GM18951 (cell line): ENCODE measurements at regions of chr5 and their contacts with region 1.

Region 1: GRCh38 chr5:5857396-5857795 is 434.9 kb downstream of the ICE1 start:
- POLR2A ChIP-seq: no peak

Region 2: DNA sequence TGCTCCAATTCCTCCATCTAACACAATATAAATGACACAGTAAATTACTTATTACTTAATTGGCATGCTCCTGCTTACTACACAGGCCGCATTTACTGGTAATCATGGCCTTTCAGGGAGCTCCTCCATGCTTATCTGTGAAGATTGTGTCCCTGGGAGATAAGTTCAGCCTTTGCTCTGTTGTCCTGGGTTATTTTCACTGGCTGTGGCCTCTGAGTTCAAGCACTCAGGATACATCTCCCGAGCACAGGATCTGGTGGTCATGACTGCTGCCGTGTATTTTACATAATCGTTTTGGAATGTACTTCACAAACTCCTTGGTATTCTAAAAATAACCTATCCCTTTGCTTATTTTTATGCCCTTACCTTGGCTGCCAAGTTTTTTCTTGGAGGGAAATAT is 219.2 kb before region 1 on chr5:
- in situ Hi-C with region 1: loop called (anchors 10 kb)
- POLR2A ChIP-seq: no peak